ENCODE measurements at regions of chr17 and their contacts with region 1.

Region 1: GRCh38 chr17:19718604-19719354 is 2.4 kb upstream of the SLC47A2 start:
- DNase-seq: peak; percentile 69
- H3K4me3 Mint-ChIP-seq: peak overlapping the region; percentile 26
- H3K27ac Mint-ChIP-seq: peak overlapping the region; percentile 29
- H3K4me1 Mint-ChIP-seq: peaks cover 40% of the 10 kb centered on the region
- H3K27me3 Mint-ChIP-seq: no peaks in the 10 kb centered on the region
- CTCF ChIP-seq: peak; percentile 62

Region 2: GRCh38 chr17:19513897-19514488 is 204.8 kb before region 1 on chr17:
- CTCF ChIA-PET with region 1: interaction called, 17 read pairs
- POLR2A ChIA-PET with region 1: interaction called, 5 read pairs
- intact Hi-C with region 1: loop called (anchors 1 kb)
- DNase-seq: peak; percentile 76
- H3K4me3 Mint-ChIP-seq: no peak overlapping the region
- H3K27ac Mint-ChIP-seq: no peak overlapping the region
- H3K4me1 Mint-ChIP-seq: no peaks in the 10 kb centered on the region
- H3K27me3 Mint-ChIP-seq: no peaks in the 10 kb centered on the region
- CTCF ChIP-seq: peak; percentile 82

Region 3: GRCh38 chr17:19630661-19631060 is 88.1 kb before region 1 on chr17:
- CTCF ChIA-PET with region 1: no interaction called
- POLR2A ChIA-PET with region 1: no interaction called
- intact Hi-C with region 1: no loop called
- DNase-seq: peak; percentile 11
- H3K4me3 Mint-ChIP-seq: no peak overlapping the region
- H3K27ac Mint-ChIP-seq: no peak overlapping the region
- H3K4me1 Mint-ChIP-seq: peaks cover 16% of the 10 kb centered on the region
- H3K27me3 Mint-ChIP-seq: no peaks in the 10 kb centered on the region
- CTCF ChIP-seq: no peak

Region 4: GRCh38 chr17:19673623-19674022 is 45.2 kb before region 1 on chr17:
- CTCF ChIA-PET with region 1: interaction called, 6 read pairs
- POLR2A ChIA-PET with region 1: interaction called, 11 read pairs
- intact Hi-C with region 1: no loop called
- DNase-seq: no peak
- H3K4me3 Mint-ChIP-seq: no peak overlapping the region
- H3K27ac Mint-ChIP-seq: no peak overlapping the region
- H3K4me1 Mint-ChIP-seq: peaks cover 6% of the 10 kb centered on the region
- H3K27me3 Mint-ChIP-seq: no peaks in the 10 kb centered on the region
- CTCF ChIP-seq: no peak

Region 5: DNA sequence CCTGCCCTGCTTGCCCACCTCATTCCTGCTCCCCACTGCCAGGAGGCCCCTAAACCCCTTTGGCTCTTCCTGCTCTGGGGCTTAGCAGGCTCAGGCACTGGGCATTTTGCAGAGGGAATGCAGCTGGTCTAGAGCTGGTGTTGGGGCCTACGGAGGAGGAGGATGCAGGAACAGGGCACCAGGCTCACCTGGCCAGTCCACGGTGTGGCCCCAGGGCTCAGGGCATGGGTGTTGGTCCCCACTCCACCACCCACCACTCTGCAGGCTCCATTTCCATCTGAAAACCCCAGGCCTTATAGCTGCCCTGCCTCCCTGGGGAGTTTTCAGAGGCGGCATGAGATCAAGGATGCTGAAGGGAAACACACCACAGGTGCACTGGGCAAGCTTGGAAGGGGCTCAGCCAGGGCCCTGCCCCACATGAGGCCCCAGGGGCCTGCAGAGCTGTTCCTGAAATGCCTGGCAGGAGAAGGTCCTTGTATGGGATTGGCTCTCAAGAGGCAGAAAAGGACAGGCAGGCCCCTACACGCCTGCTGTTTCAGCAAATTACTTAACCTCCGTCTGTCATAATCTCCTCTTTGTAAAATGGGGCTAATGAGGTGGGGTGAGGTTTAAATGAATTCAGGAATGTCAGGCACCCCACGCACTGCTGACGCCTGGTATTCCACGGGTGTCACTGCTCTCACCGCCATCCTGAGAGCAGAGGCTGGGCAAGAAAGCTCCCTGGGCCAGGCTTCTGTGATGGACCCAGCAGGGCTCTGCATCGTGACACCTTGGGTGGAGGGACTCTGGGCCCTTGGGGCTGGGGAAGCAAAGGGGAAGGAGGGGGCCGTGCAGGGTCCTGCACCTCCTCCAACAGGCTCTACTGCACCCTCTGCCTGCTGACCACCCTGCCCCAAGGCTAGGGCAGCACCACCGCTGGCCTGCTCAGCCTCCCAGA is 11.7 kb before region 1 on chr17:
- CTCF ChIA-PET with region 1: interaction called, 14 read pairs
- POLR2A ChIA-PET with region 1: interaction called, 25 read pairs
- intact Hi-C with region 1: no loop called
- DNase-seq: peak; percentile 87
- H3K4me3 Mint-ChIP-seq: no peak overlapping the region
- H3K27ac Mint-ChIP-seq: peak overlapping the region; percentile 27
- H3K4me1 Mint-ChIP-seq: peaks cover 10% of the 10 kb centered on the region
- H3K27me3 Mint-ChIP-seq: no peaks in the 10 kb centered on the region
- CTCF ChIP-seq: no peak